WTC11 (cell line): ENCODE measurements at regions of chr22 and their contacts with region 1.

Region 1: DNA sequence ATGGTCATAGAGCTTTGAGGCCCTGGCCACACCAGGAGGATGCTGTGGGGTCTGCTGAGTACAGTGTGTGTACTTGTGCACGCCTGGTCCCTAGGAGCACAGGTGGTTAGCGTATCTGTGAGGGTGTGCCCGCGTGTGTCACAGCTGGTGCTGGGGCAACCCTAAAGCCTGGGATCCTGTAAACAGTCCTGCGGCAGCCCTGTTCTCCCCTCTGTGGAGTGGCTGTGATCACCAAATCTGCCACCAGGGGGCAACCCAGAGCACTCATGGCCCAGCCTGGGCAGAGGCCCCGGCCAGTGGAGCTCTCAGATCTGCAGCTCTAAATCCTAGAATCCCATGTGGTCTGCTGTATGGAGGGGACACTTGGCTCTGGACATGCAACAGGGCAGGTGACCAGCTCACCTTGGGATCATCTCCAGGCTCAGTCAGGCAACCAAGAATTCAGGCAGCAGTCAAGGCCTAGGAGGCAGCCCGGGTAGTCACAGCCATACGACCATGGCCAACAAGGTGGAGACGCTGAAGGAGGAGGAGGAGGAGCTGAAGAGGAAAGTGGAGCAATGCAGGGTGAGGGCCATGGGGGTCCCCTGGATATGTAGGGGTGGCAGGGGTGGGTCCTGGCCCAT is 3.9 kb downstream of the SH3BP1 start:
- DNase-seq: peak; percentile 93
- ATAC-seq: peak; percentile 77
- H3K4me3 Mint-ChIP-seq: no peak overlapping the region
- H3K27ac Mint-ChIP-seq: peak overlapping the region; percentile 85
- H3K4me1 Mint-ChIP-seq: peaks cover 13% of the 10 kb centered on the region
- H3K27me3 Mint-ChIP-seq: no peaks in the 10 kb centered on the region
- CTCF ChIP-seq: peak; percentile 86

Region 2: GRCh38 chr22:37575490-37576003 is 67.8 kb before region 1 on chr22:
- CTCF ChIA-PET with region 1: no interaction called
- POLR2A ChIA-PET with region 1: no interaction called
- DNase-seq: no peak
- ATAC-seq: no peak
- H3K4me3 Mint-ChIP-seq: no peak overlapping the region
- H3K27ac Mint-ChIP-seq: no peak overlapping the region
- H3K4me1 Mint-ChIP-seq: peaks cover 4% of the 10 kb centered on the region
- H3K27me3 Mint-ChIP-seq: peaks cover 8% of the 10 kb centered on the region
- CTCF ChIP-seq: no peak

Region 3: GRCh38 chr22:37658133-37659065 is 15.1 kb after region 1 on chr22 and contains the start of gene PDXP:
- CTCF ChIA-PET with region 1: interaction called, 161 read pairs
- POLR2A ChIA-PET with region 1: interaction called, 5 read pairs
- DNase-seq: peak; percentile 98
- ATAC-seq: peak; percentile 96
- H3K4me3 Mint-ChIP-seq: peak within 1 kb of the TSS; percentile 82
- H3K27ac Mint-ChIP-seq: peak within 1 kb of the TSS; percentile 97
- H3K4me1 Mint-ChIP-seq: peaks cover 29% of the 10 kb centered on the region
- H3K27me3 Mint-ChIP-seq: no peaks in the 10 kb centered on the region
- CTCF ChIP-seq: no peak
- total RNA-seq, gene PDXP: 36.1 to 42.5 TPM (median 42.3 TPM) in 3 replicates

Region 4: DNA sequence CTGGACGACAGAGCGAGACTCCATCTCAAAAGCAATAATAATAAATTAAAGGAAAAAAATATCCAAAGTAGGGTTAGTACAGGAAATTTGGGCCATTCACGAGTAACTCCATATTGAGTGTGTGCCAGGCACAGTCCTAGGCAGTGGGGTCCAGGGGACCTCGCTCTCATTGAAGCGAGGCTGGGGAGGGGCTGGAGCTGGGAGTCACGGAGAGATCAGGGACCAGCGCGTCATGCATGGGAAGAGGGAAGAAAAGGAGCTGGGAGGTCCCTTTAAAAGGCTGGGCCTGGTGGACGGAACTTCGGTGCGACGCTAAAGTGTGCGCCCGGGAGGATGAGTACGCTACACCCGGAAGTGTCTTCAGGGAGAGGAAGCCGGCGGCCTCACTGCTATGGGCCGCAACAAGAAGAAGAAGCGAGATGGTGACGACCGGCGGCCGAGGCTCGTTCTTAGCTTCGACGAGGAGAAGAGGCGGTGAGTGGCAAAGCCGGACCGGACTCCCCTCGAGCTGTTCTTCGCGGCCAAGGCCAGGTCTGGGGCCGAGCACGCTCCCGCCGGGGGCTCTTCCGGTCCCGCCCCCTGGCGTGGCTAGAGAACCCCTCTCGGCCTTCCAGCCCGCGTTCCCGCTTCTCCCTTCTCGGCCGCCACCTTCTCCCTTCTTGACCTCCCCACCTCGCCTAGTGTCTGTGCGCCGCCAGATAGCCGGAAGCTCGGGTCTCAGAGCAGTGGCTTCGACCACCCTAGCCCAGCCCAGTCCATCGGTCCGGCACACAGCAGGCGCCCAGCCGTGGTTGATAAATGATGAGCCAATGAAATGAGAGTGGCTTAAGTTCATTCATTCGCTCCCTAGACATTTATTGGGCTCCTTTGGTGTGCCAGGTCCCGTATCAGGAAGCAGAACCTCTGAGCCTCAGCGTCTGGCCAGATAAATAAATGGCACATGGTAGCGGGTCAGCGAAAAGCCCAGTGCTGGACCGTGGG is 43.0 kb after region 1 on chr22 and contains the start of gene NOL12:
- CTCF ChIA-PET with region 1: interaction called, 85 read pairs
- POLR2A ChIA-PET with region 1: interaction called, 3 read pairs
- DNase-seq: peak; percentile 84
- ATAC-seq: peak; percentile 84
- H3K4me3 Mint-ChIP-seq: peak within 1 kb of the TSS; percentile 99
- H3K27ac Mint-ChIP-seq: peak within 1 kb of the TSS; percentile 96
- H3K4me1 Mint-ChIP-seq: peaks cover 10% of the 10 kb centered on the region
- H3K27me3 Mint-ChIP-seq: peaks cover 1% of the 10 kb centered on the region
- CTCF ChIP-seq: no peak
- total RNA-seq, gene NOL12: 20.3 to 24.9 TPM (median 22.0 TPM) in 3 replicates

Region 5: DNA sequence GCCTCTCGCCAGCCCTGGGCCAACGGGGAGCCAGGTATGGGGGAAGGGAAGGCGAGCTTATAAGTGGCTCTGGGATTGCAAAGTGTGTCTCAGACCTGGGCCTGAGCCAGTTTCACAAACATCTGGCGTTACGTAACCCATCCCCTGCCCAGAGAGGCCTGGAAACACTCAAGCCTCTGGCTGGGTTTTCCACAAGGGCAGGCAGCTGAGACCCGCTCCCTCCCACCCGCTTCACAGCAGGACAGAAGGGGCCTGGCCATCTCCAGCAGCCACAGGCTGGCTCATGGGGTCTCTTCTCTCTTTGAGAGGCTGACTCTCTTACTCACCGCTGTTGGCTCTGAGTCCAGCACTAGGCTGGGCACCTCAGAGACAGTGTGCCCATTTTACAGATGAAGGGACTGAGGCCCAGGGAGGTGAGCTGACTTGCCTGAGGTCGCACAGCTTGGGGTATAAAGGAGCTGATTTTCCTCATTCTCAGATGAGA is 98.0 kb after region 1 on chr22:
- CTCF ChIA-PET with region 1: interaction called, 12 read pairs
- POLR2A ChIA-PET with region 1: interaction called, 3 read pairs
- DNase-seq: no peak
- ATAC-seq: no peak; the same call in 1 of the 2 replicates
- H3K4me3 Mint-ChIP-seq: no peak overlapping the region
- H3K27ac Mint-ChIP-seq: no peak overlapping the region
- H3K4me1 Mint-ChIP-seq: peaks cover 9% of the 10 kb centered on the region
- H3K27me3 Mint-ChIP-seq: peaks cover 77% of the 10 kb centered on the region
- CTCF ChIP-seq: no peak

Region 6: DNA sequence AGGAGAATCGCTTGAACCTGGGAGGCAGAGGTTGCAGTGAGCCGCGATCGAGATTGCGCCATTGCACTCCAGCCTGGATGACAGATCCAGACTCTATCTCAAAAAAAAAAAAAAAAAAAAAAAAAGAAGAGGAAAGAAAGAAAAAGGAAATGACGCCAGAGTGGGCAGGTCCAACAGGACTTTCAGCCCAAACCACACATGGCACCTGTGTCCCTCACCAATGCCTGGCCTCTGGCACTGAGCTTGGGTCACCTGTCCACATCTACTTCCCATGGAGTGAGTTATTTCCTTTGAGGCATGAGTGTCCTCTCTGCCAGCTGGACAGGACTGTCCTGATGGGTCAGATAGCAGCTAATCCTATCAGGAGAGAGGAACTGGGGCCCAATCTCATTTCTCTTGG is 149.2 kb after region 1 on chr22:
- CTCF ChIA-PET with region 1: interaction called, 12 read pairs
- POLR2A ChIA-PET with region 1: no interaction called
- DNase-seq: no peak
- ATAC-seq: no peak
- H3K4me3 Mint-ChIP-seq: no peak overlapping the region
- H3K27ac Mint-ChIP-seq: no peak overlapping the region
- H3K4me1 Mint-ChIP-seq: no peaks in the 10 kb centered on the region
- H3K27me3 Mint-ChIP-seq: peaks cover 53% of the 10 kb centered on the region
- CTCF ChIP-seq: no peak